Common myeloid progenitor, CD34-positive (primary cell): ENCODE measurements at regions of chr1 and their contacts with region 1.

Region 1: GRCh38 chr1:33455539-33456501 is 16.6 kb upstream of the ZSCAN20 start:
- DNase-seq: peak; percentile 83 to 91 (median 90)
- H3K4me3 ChIP-seq: peak overlapping the region in 1 of 7 experiments; percentile 5
- H3K27ac ChIP-seq: no peak overlapping the region
- H3K4me1 ChIP-seq: peaks cover 0 to 15% (median 11%) of the 10 kb centered on the region in 4 experiments
- H3K27me3 ChIP-seq: no peaks in the 10 kb centered on the region

Region 2: GRCh38 chr1:33472349-33472980 is 16.6 kb after region 1 on chr1 and contains the start of gene ZSCAN20:
- CTCF ChIA-PET with region 1: interaction called, 61 read pairs
- POLR2A ChIA-PET with region 1: no interaction called
- DNase-seq: peak; percentile 90 to 91 (median 90)
- H3K4me3 ChIP-seq: peak within 1 kb of the TSS; percentile 53 to 87 (median 75)
- H3K27ac ChIP-seq: peak within 1 kb of the TSS in 1 of 2 experiments; percentile 21
- H3K4me1 ChIP-seq: peaks cover 11 to 36% (median 28%) of the 10 kb centered on the region in 4 experiments
- H3K27me3 ChIP-seq: no peaks in the 10 kb centered on the region